Right ventricle myocardium superior (tissue), 1 donor: ENCODE measurements at regions of chr17 and their contacts with region 1.

Region 1: DNA sequence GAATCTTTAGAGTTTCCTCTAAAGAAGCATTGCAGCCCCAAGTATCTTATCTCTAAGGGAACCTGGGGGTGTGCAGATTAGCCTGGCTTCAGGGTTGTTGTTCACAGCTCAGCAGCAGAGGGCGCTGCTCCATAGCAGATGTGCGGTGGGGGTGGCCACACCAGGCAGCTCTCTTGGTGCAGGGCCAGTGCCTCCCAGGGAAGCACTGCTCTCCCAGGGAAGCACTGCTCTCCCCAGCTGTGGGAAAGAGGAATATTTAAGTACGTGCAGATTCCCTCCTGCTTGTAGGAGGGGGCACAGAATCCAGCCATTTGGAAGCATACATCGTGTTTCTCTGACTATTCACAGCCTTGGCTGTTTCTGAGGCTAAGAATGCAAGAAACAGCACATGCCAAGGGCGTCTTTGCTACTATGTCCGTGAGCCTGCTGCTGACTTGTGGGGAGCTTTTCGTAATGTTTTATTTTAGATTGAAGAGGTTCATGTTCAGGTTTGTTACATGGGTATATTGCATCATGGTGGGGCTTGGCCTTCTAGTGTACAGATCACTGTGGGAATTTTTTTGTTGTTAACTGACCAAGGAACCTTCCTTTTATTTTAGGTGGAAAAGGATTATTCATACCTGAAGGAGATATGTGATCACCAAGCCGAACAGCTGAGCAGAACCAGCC is 217.8 kb downstream of the SPECC1 start:
- DNase-seq: peak; percentile 89
- ATAC-seq: peak; percentile 99

Region 2: DNA sequence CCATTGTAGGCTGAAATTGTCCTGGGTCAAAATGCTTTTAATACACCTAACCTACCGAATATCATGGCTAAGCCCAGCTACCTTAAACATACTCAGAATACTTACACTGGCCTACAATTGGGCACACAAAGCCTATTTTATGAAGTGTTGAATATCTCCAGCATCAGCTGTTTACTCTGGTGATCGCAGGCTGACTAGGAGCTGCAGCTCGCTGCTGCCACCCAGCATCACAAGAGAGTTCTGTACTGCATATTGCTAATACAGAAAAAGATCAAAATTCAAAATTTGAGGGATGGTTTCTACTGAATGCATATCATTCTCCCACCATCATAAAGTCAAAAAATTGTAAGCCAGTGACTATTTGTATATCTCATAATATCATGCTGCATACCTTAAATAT is 414.5 kb before region 1 on chr17:
- intact Hi-C with region 1: no loop called
- DNase-seq: no peak
- ATAC-seq: no peak

Region 3: GRCh38 chr17:20121359-20122253 is 105.3 kb before region 1 on chr17:
- intact Hi-C with region 1: loop called (anchors 10 kb)
- DNase-seq: peak; percentile 66
- ATAC-seq: peak; percentile 83

Region 4: DNA sequence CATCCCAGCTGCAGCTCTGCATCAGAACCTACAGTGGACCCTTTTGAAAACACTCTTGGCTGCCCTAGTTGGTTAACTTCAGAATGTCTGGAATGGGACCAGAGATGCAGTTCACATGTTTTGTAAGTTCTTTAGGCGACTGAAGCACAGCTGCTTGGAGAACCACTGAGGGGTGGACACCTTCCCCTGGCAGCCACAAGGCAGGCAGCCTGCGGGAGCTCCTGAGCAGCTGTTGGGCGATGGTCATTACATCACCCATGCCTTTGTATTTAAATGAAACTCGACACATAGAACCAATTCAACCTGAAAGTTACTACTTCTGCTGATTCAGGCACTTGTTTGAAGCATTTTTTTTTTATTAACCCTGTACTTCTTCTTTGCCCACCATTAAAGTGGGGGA is 88.9 kb after region 1 on chr17:
- intact Hi-C with region 1: loop called (anchors 10 kb)
- DNase-seq: no peak
- ATAC-seq: no peak

Region 5: DNA sequence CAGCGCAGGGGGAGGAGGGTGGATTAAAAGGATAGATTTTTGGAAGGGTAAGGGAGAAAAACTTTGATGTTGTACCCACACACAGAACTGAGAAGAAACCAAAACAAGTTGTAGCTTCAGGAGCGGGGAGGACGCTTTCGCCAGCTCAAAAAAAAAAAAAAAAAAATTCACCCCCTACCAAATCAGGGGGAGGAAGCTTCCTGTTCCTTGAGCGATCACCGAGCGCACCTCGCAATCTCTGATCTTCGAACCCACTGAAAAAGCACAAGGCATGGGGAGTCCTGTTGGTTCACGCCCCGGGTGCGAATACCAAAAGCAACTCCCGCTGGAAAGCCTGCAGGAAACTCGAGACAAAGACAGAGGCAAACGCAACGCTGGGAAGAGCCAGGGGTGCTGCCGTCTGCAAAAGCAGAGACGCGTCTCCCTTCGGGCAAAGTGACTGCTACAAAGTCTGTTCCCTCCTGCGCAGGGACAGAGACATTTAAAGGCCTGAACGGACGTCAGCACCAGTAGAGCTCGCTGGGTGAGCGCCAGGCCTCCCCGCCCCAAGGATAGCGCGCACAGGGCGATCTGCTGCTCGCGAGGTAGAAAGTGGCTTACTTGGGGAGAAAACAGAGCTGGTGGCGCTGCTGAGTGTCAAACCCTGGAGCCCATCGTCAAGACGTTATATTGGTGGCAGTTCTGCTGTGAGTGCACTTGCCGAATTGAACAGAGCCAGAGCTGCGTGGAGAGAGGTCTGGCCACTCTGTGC is 625.5 kb after region 1 on chr17:
- intact Hi-C with region 1: loop called (anchors 10 kb)
- DNase-seq: peak; percentile 51
- ATAC-seq: peak; percentile 31